ENCODE measurements at regions of chr20 and their contacts with region 1.

Region 1: GRCh38 chr20:54649511-54649962 is 174.1 kb downstream of the DOK5 start:
- DNase-seq: peak; percentile 87
- H3K4me3 Mint-ChIP-seq: no peak overlapping the region
- H3K27ac Mint-ChIP-seq: no peak overlapping the region
- H3K4me1 Mint-ChIP-seq: no peaks in the 10 kb centered on the region
- H3K27me3 Mint-ChIP-seq: peaks cover 12% of the 10 kb centered on the region

Region 2: DNA sequence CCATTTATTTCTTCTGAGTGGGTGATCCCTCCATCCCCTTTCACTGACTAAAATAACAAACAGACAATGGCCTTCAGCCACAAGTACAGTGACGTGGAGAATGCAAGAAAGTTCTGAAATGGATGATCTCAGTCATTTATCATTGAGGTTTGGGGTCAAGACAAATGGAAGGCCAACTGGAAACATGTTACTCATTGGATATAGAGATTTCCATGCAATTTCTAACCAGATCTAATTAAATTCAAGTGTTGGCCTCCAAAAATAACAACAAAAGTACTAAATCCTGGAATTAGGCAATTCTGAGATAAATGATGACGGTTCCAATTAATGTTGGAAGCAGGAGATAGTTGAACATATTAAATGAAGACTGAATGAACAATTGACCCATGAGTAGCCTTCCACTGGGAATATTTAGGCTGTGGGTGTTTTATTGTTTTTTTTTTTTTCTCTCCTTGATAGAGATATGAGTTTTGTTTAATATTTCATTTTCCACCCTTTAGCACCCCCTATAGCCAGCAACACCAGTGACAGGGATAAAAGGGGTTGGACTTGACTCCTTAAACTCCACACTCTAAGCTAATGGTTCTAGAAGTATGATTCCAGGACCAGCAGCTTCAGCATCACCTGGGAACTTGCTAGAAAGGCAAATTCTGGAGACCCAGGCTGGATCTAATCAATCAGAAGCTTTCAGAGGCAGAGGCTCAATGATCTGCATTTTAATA is 691.9 kb before region 1 on chr20:
- CTCF ChIA-PET with region 1: no interaction called
- intact Hi-C with region 1: loop called (anchors 10 kb)
- DNase-seq: no peak
- H3K4me3 Mint-ChIP-seq: no peak overlapping the region
- H3K27ac Mint-ChIP-seq: no peak overlapping the region
- H3K4me1 Mint-ChIP-seq: no peaks in the 10 kb centered on the region
- H3K27me3 Mint-ChIP-seq: no peaks in the 10 kb centered on the region

Region 3: GRCh38 chr20:54093423-54094267 is 555.9 kb before region 1 on chr20:
- CTCF ChIA-PET with region 1: interaction called, 13 read pairs
- intact Hi-C with region 1: loop called (anchors 1 kb)
- DNase-seq: no peak
- H3K4me3 Mint-ChIP-seq: no peak overlapping the region
- H3K27ac Mint-ChIP-seq: no peak overlapping the region
- H3K4me1 Mint-ChIP-seq: no peaks in the 10 kb centered on the region
- H3K27me3 Mint-ChIP-seq: no peaks in the 10 kb centered on the region

Region 4: DNA sequence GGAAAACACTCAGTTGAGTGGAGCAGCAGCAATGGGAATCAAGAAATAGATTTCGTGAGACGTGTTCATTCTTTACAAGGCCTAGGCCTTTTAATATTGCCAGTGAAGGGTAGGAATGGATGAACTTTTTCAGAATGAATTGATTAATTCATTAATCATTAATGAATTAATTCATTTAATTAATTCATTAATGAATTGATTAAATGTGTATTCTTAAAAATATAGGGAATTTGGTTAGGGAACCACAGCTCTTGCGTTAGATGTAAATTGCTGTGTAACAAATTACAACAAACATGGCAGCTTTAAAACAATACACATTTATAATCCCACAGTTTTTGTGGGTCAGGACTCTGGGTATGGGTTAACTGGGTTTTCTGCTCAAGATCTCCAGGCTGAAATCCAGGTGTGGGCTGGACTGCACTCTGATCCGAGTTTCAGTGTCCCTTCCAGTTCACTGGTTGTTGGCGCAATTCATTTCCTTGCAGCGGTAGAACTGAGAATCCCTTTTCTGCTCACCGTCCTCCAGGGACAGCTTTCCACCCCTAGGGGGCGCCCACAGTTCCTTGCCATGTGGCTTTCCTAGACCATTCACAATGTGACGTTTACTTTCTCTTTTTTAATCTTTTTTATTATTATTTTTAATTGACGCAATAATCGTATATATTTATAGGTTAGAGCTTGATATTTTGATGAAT is 546.3 kb before region 1 on chr20:
- CTCF ChIA-PET with region 1: interaction called, 10 read pairs
- intact Hi-C with region 1: no loop called
- DNase-seq: peak; percentile 88
- H3K4me3 Mint-ChIP-seq: no peak overlapping the region
- H3K27ac Mint-ChIP-seq: no peak overlapping the region
- H3K4me1 Mint-ChIP-seq: no peaks in the 10 kb centered on the region
- H3K27me3 Mint-ChIP-seq: peaks cover 3% of the 10 kb centered on the region

Region 5: GRCh38 chr20:54199721-54200176 is 449.8 kb before region 1 on chr20:
- CTCF ChIA-PET with region 1: interaction called, 9 read pairs
- intact Hi-C with region 1: loop called (anchors 1 kb)
- DNase-seq: peak; percentile 80
- H3K4me3 Mint-ChIP-seq: no peak overlapping the region
- H3K27ac Mint-ChIP-seq: no peak overlapping the region
- H3K4me1 Mint-ChIP-seq: no peaks in the 10 kb centered on the region
- H3K27me3 Mint-ChIP-seq: no peaks in the 10 kb centered on the region

Region 6: DNA sequence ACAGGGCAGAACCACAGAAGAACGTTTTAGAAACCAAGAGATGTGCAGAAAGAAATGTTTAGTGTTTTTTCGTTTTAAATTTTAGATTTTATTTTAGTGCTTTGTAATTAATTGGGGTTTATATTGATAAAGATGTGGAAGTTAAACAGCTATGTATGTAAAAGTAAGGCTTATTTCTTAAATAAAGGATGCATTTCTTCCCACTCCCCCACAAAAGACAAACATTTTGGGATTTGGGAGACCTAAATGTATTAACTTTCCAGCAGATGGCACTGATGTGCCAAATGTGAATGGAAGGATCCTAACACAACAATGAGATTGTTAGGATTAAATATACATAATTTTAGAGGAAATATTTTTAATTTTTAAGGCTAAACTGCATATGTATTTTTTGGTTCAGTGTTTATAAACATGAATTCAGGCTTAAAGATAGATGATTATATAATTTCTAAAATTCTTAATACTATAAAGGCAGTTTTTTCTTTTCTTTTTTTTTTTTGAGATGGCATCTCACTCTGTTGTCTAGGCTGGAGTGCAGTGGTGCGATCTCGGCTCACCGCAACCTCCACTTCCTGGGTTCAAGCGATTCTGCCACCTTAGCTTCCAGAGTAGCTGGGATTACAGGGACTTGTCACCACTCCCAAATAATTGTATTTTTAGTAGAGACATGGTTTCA is 429.6 kb before region 1 on chr20:
- CTCF ChIA-PET with region 1: interaction called, 14 read pairs
- intact Hi-C with region 1: loop called (anchors 1 kb)
- DNase-seq: peak; percentile 33
- H3K4me3 Mint-ChIP-seq: no peak overlapping the region
- H3K27ac Mint-ChIP-seq: peak overlapping the region; percentile 85
- H3K4me1 Mint-ChIP-seq: peaks cover 40% of the 10 kb centered on the region
- H3K27me3 Mint-ChIP-seq: no peaks in the 10 kb centered on the region

Region 7: DNA sequence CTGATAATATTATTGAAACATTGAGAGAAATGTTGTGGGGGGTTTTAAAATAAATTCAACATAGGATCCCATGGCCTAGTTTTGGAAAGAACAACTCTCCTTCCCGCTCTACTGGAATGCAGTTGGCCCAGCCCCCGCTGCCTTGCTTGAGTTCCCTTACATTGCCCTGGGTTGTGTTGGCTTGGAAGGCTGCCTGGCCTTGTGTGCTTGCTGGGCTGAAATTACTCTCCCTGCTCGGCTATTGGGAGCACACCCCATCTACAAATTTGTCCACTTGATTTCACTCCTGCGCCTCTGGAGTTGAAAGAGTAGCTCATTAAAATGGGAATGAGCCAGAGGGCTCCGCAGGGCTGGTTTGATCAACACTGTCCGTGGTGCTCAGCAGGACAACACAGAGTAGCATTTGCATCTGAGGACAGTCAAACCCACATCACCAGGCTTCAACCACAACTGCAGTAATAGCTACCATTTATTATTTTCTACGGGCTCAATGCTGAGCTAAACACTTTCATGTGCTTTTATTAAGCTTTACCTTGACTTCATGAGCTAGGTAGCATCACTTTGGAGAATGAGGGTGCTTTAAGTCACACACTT is 138.9 kb before region 1 on chr20:
- CTCF ChIA-PET with region 1: no interaction called
- intact Hi-C with region 1: no loop called
- DNase-seq: no peak
- H3K4me3 Mint-ChIP-seq: no peak overlapping the region
- H3K27ac Mint-ChIP-seq: no peak overlapping the region
- H3K4me1 Mint-ChIP-seq: no peaks in the 10 kb centered on the region
- H3K27me3 Mint-ChIP-seq: peaks cover 9% of the 10 kb centered on the region